Posterior cingulate gyrus (tissue), 11 donors: ENCODE measurements at regions of chr1 and their contacts with region 1.

Region 1: GRCh38 chr1:158203693-158204457 is 23.2 kb downstream of the CD1D start:
- DNase-seq: peak in 1 of 10 donors; percentile 33

Region 2: DNA sequence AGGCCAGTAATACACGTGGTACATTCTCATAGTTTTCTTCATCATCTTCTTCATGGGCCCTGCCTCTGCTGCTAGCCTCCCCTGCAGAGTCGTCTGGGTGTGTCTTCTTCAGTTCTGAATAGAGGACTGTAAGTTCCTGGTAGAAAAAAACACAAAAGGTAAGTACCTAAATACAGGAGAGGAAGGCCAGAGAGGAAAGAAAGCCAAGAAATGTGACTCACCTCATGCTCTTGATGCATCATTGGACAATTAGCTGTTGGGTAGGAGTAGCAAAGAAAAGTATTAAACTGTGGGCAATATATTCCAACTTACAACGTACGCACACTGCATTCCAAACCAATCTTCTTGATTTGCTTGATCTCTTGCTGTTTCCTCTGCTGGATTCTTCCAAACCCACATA is 525.2 kb before region 1 on chr1:
- intact Hi-C with region 1: no loop called
- DNase-seq: no peak

Region 3: GRCh38 chr1:158496374-158496773 is 292.5 kb after region 1 on chr1:
- intact Hi-C with region 1: loop called (anchors 2 kb)
- DNase-seq: no peak

Region 4: DNA sequence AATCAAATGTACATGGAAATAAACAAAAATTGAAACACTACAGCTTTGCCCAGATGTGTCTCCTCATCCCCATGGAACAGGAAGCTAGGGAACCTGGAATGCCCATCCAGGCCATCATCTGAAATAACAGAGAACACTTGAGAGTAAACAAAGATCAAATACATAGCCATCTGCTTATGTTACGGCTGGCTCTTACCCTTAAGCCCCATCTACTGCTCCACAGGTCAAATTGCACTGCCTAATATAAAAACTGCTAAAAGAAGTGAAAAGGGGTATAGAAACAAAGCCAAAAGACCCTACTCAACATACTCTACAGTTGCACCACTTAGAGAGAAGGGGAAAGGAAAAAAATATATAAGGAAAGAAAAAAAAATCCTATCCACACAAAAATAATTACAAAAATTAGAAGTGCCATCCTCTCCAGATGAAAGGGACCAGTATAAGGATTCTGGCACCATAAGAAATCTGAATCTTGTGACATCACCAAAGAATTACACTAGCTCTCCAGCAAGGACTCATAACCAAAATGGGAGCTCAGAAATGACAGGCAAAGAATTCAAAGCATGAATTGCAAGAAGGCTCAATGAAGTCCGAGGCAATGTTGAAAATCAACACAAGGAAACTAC is 323.4 kb after region 1 on chr1:
- intact Hi-C with region 1: loop called (anchors 2 kb)
- DNase-seq: peak in 1 of 10 donors; percentile 12

Region 5: GRCh38 chr1:158998781-158999161 is 794.9 kb after region 1 on chr1:
- intact Hi-C with region 1: loop called (anchors 1 kb)
- DNase-seq: peak in 6 of 10 donors; percentile 48 to 93 (median 54)

Region 6: DNA sequence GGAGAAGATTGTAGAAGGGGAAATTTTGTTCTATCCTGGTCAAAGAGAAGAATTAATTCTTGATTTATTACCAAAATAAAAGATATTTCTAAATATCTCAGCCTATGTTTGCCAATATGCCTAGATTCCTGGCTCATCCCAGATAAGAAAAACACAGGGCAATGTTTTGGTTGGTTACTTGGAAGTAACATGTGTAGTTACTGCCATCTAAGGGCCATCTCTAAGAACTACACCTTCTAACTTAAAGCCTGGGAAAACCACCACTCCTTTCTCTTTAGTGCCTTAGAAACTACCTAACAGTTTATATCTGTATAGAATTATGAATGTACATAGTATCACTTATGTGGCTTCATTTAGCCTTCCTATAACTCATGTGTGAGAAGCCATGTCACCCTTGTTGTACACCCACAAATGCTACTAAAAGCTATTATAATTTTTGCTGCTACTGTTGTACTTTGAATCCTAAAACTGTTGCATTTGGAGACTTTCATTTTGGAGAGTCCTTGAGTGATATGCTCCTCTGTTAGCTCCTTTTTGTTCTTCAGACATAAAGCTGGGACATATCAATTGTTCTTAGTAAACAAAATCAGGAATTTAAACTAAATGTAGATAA is 868.2 kb after region 1 on chr1:
- intact Hi-C with region 1: loop called (anchors 2 kb)
- DNase-seq: no peak